ENCODE measurements at regions of chr16 and their contacts with region 1.

Region 1: DNA sequence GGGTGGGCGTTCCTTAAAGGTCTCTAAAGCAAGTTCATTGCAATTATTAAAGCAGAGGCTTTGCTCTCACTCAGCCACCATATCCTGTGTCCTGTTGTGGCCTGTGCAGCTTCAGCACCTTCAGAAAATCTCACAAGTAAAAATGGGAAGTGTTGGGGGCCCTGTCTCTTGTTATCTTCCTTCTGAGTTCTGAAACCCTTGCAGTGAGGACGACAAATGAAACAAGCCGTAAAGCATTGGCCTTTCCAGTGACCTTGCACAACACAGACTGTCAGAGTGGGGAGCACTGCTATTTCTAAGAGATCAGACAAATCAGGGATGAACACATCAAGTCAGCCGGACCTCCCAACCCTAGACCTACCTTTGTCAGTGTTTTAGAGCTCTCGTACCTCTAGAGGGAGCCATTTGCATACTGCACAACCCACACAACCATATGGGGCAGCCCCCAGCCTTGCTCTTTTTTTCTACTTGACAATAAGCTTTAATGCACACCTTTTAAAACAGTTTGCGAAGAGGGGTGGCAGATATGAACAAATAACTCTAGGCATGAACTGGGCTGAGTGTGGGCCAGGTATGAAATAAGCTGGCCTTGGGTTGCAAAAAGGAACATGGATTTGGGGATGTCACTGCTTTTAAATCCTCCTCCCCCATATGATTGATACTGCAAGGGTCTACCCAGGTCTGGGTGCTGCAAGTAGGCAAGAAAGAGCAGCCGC is 89.8 kb downstream of the KATNIP start:
- DNase-seq: peak; percentile 25

Region 2: DNA sequence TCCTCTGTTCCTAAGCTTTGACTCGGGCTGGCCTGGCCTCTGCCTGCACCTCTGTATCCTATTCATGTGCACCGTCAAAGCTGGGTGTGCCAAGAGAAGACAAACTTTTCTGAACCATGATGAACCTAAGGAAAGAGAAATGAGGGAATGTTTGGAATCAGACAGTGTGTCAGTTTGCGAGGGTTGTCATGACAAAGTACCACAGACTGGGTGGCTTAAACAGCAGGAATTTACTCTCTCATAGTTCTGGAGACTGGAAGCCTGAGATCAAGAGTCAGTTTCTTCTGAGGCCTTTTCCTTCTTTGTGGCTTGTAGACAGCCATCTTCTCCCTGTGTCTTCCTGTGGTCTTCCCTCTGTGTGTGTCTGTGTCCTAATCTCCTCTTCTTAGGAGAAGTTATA is 39.2 kb after region 1 on chr16:
- intact Hi-C with region 1: loop called in 1 of 2 experiments (anchors 1 kb)
- DNase-seq: no peak